ENCODE measurements at regions of chr19 and their contacts with region 1.

Region 1: DNA sequence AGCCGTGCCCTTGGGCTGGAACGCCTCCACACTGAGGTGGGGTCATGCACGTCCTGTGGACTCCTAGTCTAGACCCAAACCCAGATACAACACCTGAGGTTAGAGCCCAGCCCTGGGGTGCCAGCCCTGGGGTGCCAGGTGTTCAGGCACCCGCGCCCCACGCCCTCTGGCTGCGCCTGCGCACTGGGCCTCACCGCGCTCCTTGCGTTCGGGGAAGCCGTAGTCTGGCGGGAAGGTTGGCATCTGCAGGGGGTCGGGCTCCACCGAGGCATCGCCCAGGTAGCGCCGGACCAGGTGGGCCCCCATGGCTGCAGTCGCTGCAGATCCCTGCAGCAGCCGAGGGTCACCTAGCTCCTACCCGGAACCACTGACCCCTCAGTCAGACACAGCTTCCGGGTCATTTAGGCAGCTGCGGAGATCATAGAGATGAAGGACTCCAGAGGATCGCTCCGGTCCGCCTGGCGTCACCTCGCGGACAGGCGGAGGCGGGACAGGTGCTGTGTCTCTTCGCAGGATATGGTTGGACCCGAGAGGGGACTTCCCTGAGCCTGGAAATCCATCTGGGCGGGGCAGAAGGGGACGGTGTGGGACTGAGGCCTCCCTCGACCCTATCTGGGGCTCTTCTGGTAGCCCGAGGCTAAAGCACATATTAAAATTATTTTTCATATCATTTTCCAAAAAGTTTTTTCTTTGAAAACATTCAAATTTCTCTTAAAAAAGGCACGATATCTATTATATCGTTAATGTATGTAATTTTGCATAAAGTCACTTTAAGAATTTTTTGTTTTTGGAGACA is at the start of gene NDUFB7:
- DNase-seq: peak; percentile 94
- ATAC-seq: peak; percentile 98
- total RNA-seq, gene NDUFB7: 533 TPM

Region 2: DNA sequence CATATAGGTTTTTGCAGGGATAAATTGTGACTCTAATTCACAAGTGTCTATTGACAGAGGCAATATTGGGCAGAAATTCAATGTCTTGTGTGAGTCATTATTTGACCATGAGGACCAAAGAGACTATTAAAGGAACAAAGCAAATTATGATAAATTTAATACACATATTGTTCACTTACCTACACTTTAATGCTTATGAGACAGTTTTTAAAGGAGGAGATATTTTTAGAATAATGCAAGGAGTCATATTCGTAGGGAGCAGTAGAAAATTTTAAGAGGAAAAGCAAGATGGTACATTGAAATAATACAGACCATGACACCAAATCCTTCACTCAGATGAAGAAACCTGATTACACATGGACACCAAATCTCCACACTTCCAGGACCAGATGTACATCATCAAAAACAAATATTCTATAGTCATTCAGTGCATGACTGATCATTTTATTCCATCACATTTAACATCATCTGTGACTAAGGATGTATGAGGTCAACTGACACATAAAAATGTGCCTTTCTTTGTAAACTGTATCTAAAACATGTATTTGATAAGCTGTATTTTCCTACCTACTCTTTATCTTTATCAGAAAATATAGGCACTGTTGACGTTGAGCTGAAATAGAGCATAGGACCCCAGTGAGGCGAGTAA is 318.2 kb after region 1 on chr19:
- intact Hi-C with region 1: loop called (anchors 10 kb)
- DNase-seq: no peak
- ATAC-seq: no peak